ENCODE measurements at regions of chr3 and their contacts with region 1.

Region 1: DNA sequence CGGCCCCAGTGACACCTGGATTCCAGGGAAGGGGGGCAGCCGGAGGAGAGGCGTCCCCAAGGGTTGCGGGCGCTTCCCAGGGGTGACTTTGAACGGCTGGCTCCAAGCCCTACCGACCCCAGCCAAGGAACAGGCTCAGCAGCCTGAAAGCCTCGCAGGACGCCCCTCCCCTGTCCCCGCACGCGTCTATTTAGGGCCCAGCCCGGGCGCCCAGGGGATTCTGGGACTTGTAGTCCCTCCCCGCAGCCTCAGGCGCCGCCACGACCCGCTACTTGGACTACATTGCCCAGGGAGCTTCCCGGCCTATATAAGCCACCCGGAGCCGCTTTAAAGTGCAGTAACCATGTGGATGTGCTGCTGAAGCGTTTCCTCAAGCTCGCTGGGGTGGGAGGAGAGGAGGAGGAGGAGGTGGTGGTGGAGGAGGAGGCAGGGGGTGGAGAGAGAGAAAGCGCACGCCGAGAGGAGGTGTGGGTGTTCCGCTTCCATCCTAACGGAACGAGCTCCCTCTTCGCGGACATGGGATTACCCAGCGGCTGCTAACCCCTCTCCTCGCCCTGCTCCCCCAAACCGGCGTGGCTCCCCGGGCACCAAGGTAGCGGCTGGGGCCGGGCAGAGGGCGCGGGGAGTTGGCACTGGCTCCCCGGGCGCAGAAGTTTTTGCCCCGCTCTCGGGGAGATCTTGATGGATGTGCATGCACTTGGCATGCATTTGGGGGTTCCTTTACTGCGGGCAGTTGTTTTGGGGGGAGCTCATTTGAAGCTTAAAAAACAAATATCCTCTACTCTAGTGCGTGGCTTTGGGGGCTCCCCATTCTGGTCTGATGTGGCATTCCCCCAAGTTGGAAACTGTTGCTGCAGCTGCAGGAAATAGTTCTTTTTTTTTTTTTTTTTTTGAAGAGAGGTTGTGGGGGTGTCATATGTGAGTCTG is at the start of gene ITPR1:
- DNase-seq: peak; percentile 99
- H3K4me3 ChIP-seq: peak within 1 kb of the TSS; percentile 75 to 88 (median 85)
- H3K27ac ChIP-seq: peak within 1 kb of the TSS; percentile 80
- H3K4me1 ChIP-seq: peaks cover 24% of the 10 kb centered on the region
- H3K27me3 ChIP-seq: peaks cover 0 to 2% of the 10 kb centered on the region in 2 experiments
- CTCF ChIP-seq: no peak
- POLR2A ChIP-seq: peak; percentile 99
- total RNA-seq, gene ITPR1: 16.1 and 18.0 TPM in 2 replicates

Region 2: DNA sequence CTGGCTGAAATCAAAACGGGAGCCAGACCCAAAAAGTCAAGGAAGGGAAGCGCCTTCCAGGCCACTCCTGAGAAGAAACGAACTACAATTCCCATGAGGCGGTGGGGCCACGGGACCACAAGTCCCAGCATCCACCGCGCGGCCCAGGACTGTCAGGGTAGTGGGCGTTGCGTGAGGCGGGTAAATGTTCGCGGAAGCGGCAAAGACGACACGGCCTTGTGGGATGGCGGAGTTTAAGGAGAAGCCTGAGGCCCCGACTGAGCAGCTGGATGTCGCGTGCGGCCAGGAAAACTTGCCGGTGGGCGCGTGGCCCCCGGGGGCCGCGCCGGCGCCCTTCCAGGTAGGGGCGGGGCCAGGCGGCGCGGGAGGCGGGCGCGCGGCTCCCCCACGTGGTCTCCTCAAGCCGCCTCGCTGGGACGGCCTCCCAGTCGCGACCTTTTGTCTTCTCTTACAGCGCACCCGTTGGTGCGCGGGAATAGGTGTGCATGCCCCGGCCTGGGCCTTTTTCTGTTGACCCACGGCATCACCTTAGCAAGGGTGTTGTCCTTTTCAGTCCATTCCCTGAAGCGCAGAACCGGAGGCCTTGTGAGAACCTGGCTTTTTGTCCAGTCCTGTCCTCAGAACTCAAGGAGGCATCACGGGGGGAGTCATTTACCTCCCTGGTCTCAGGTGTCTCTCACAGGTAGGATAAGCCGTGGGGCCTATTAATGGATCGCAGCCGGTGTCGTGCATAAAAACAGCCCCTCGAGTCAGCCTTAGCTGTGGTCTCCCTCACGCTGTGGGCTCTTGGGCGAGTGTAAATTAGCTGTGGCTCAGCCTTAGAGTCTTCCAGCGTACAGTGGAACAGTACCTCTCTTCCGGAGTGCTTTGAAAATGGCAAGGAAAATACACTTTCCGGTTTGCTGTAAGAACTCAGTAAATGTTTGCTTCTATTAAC is 189.8 kb before region 1 on chr3 and contains the start of gene SETMAR:
- CTCF ChIA-PET with region 1: no interaction called
- POLR2A ChIA-PET with region 1: no interaction called
- dilution Hi-C with region 1: no loop called
- intact Hi-C with region 1: loop called (anchors 2 kb)
- DNase-seq: peak; percentile 85
- H3K4me3 ChIP-seq: peak within 1 kb of the TSS; percentile 57 to 74 (median 59)
- H3K27ac ChIP-seq: peak within 1 kb of the TSS; percentile 81
- H3K4me1 ChIP-seq: peaks cover 9% of the 10 kb centered on the region
- H3K27me3 ChIP-seq: no peaks in the 10 kb centered on the region
- CTCF ChIP-seq: no peak
- POLR2A ChIP-seq: peak; percentile 82
- total RNA-seq, gene SETMAR: 15.4 and 15.9 TPM in 2 replicates

Region 3: GRCh38 chr3:4409971-4410573 is 83.2 kb before region 1 on chr3:
- CTCF ChIA-PET with region 1: no interaction called
- POLR2A ChIA-PET with region 1: interaction called, 7 read pairs
- dilution Hi-C with region 1: no loop called
- intact Hi-C with region 1: loop called (anchors 5 kb)
- DNase-seq: peak; percentile 42
- H3K4me3 ChIP-seq: no peak overlapping the region
- H3K27ac ChIP-seq: no peak overlapping the region
- H3K4me1 ChIP-seq: peaks cover 11% of the 10 kb centered on the region
- H3K27me3 ChIP-seq: no peaks in the 10 kb centered on the region
- CTCF ChIP-seq: no peak
- POLR2A ChIP-seq: no peak

Region 4: DNA sequence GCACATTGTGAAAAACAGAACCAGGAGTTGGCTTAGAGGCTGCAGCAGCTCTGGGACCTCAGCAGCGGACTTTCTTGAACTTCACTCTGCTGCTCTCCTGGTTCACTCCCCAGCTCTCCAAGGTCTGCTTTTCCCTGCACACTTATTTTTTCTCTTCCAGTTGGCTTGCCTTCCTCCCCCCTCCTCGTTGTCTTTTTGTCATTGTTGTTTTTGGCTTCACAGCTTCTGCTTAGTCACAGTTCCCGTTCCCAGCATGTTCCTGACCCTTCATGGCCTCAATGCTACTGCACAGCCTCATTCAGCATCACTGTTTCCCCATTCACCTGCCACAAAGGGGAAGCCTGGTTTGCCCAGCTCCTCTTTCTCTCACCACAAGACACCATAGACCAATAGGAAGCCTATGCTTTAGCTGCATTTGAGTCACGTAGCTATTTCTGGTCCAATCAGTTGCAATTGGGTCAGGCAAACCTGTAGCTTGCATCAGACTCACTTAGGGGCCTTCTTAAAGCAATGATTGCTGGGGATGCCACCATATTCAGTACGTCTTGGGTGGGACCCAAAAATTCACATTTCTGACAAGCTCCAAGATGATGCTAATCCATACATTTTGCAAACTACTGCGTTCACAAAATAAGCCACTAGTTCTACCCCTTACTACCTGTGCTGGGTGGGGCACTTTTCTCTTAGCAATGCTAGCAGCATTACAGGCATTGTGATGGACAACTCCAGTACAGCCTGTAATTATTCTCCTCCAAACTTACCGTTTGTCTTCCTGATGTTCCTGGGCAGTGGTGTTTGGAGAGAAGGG is 18.4 kb before region 1 on chr3:
- CTCF ChIA-PET with region 1: interaction called, 5 read pairs
- POLR2A ChIA-PET with region 1: interaction called, 10 read pairs
- dilution Hi-C with region 1: no loop called
- intact Hi-C with region 1: loop called (anchors 1 kb)
- DNase-seq: peak; percentile 97
- H3K4me3 ChIP-seq: no peak overlapping the region
- H3K27ac ChIP-seq: peak overlapping the region; percentile 60
- H3K4me1 ChIP-seq: peaks cover 22% of the 10 kb centered on the region
- H3K27me3 ChIP-seq: peaks cover 0 to 3% of the 10 kb centered on the region in 2 experiments
- CTCF ChIP-seq: no peak
- POLR2A ChIP-seq: no peak

Region 5: DNA sequence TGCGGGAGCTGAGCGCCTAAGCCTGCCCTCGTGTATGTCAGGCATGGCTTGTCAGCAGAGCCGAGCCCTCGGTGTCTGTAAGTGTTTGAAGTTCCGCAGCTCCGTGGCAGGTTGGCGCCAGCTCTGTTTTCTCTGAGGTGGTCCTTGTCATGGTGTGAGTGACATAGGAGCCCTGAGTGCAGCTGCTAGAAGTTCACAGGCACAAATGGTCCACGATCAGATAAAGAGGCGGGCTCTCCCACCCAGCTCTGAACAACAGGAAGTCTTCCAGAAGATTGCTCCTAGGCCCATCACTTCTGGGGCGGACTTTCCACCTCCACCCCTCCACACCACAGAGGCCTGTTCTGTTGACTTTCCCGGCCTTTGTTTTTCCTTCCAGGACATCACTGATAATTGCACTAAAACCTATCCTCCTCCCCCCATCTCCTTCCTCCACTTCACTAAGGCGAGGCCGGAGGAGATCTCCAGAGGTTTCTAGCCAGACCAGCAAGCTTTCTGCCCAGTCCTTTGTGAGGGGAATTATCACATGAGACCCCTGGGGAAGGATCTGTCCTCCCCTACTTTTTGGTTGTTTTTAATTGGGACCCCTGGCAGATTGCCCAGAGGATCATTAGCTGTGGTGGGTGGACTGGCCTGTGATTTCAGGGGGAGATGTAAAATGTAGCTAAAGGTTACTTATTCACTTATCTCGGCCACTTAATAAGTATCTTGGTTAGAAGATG is 19.8 kb after region 1 on chr3:
- CTCF ChIA-PET with region 1: interaction called, 3 read pairs
- POLR2A ChIA-PET with region 1: interaction called, 26 read pairs
- dilution Hi-C with region 1: no loop called
- intact Hi-C with region 1: no loop called
- DNase-seq: no peak
- H3K4me3 ChIP-seq: no peak overlapping the region
- H3K27ac ChIP-seq: no peak overlapping the region
- H3K4me1 ChIP-seq: no peaks in the 10 kb centered on the region
- H3K27me3 ChIP-seq: no peaks in the 10 kb centered on the region
- CTCF ChIP-seq: no peak
- POLR2A ChIP-seq: no peak

Region 6: GRCh38 chr3:4584456-4585249 is 91.4 kb after region 1 on chr3:
- CTCF ChIA-PET with region 1: interaction called, 10 read pairs
- POLR2A ChIA-PET with region 1: interaction called, 4 read pairs
- dilution Hi-C with region 1: no loop called
- intact Hi-C with region 1: no loop called
- DNase-seq: peak; percentile 18
- H3K4me3 ChIP-seq: peak overlapping the region in 1 of 3 experiments; percentile 13
- H3K27ac ChIP-seq: no peak overlapping the region
- H3K4me1 ChIP-seq: no peaks in the 10 kb centered on the region
- H3K27me3 ChIP-seq: peaks cover 1 to 4% of the 10 kb centered on the region in 2 experiments
- CTCF ChIP-seq: no peak
- POLR2A ChIP-seq: no peak

Region 7: DNA sequence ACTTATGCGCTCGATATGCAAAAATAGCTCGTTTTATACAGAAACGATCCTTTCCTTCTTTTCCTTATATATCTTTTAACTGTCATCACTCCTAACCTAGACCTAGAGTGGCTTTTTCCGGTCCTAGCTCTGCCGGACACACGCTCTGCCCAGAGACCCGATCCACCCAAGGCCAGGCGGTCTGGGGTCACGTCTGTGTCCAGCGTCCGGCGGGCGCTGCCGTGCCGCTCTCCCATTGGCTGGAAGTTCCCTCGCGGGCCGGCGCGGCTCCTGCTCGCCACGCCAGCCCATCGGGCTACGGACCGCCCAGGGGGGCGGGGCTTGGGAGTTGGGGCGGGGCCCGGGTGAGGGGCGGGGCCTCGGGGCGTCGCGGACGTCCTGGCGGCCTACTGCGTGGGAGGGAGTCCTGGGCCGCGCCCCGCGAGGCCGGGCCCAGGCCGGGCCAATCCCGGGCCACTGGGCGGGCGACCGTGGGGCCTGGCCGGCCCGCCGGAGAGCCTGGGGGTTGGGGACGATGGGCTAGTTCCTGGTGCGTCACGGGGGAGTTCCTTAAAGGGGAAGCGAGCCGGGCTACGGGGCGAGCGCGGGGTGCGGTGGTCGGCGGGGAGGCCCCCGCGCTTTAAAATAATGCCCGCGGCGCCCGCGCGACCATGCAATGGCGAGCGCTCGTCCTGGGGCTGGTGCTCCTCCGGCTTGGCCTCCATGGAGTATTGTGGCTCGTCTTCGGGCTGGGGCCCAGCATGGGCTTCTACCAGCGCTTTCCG is 694.1 kb after region 1 on chr3 and contains the start of gene EDEM1:
- CTCF ChIA-PET with region 1: interaction called, 4 read pairs
- POLR2A ChIA-PET with region 1: interaction called, 3 read pairs
- dilution Hi-C with region 1: no loop called
- intact Hi-C with region 1: loop called (anchors 5 kb)
- DNase-seq: peak; percentile 98
- H3K4me3 ChIP-seq: peak within 1 kb of the TSS; percentile 82 to 88 (median 83)
- H3K27ac ChIP-seq: peak within 1 kb of the TSS; percentile 92
- H3K4me1 ChIP-seq: peaks cover 21% of the 10 kb centered on the region
- H3K27me3 ChIP-seq: no peaks in the 10 kb centered on the region
- CTCF ChIP-seq: no peak
- POLR2A ChIP-seq: peak; percentile 72
- total RNA-seq, gene EDEM1: 61.1 and 65.4 TPM in 2 replicates

Measured in endothelial cell of umbilical vein (primary cell).